Activated CD4-positive, alpha-beta T cell treated with anti-CD3 and anti-CD28 coated beads, Interleukin-2, amount 10 ng/mL, durations not matched to agents 24 days and 14 days (primary cell): ENCODE measurements at regions of chr2 and their contacts with region 1.

Region 1: DNA sequence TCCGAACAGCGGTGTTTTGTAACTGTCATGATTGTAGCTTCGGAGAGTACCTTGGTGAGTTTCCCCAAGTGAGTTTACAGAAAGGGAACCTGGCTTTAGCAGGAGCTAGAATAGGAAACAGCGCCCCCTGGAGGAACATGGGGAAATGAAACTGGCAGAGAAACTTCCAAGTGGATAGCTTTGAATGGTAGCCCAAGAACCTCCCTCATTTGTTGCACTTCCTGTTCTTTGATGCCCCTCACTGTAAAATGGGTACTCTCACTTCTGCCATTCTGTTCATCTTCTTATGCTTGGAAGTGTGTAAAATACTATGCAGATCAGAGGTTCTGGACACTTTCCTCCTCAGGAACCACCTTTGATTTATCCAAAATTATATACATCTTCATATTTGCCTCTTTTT is 36.2 kb downstream of the CHST10 start:
- DNase-seq: peak; percentile 93
- H3K4me3 Mint-ChIP-seq: no peak overlapping the region
- H3K27ac Mint-ChIP-seq: no peak overlapping the region
- H3K4me1 Mint-ChIP-seq: peaks cover 3% of the 10 kb centered on the region
- H3K27me3 Mint-ChIP-seq: peaks cover 9% of the 10 kb centered on the region

Region 2: DNA sequence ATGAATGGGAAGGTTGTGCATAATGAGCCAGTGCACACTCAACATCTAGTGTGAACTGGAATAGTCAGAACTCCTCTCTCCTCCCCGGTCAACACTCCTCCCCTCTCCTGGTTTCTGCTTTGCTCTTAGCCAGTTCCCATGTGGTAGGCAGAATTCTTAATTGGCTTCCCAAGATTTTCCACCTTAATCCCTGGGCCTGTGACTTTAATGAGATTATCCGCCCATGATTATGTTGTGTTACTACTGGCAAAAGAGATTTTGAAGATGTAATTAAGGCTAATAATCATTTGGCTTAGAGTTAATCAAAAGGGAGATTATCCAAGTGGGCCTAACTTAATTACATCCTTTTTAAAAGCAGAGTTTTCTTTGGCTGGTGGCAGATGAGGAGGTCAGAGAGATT is 857.2 kb before region 1 on chr2:
- intact Hi-C with region 1: no loop called
- DNase-seq: no peak
- H3K4me3 Mint-ChIP-seq: no peak overlapping the region
- H3K27ac Mint-ChIP-seq: no peak overlapping the region
- H3K4me1 Mint-ChIP-seq: no peaks in the 10 kb centered on the region
- H3K27me3 Mint-ChIP-seq: peaks cover 4% of the 10 kb centered on the region

Region 3: DNA sequence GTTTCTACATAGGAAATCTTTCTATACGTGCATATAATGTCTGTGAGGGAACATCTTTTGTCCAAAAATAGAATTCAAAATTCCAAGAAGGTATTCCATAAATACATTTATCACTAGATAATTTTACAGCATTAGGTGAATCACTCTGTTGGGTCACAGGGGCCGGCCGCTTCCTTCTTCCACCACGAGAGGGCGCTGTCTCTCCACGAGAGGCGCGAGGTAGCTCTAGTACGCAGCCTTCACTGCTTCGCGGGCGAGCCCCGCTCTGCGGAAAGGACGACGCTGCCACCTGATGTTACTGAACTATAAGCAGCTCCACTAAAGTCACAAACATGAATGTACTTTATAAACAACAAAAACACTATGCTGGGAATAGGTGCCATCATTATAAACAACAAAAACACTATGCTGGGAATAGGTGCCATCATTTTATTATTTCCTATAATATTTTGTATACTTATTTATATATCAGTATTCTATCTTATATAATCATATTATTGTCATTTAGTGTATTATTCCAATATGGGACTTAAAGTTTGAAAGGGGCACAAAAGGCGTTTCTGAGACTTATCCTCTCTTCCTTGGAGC is 822.1 kb before region 1 on chr2:
- intact Hi-C with region 1: loop called (anchors 2 kb)
- DNase-seq: peak; percentile 93
- H3K4me3 Mint-ChIP-seq: no peak overlapping the region
- H3K27ac Mint-ChIP-seq: no peak overlapping the region
- H3K4me1 Mint-ChIP-seq: peaks cover 2% of the 10 kb centered on the region
- H3K27me3 Mint-ChIP-seq: peaks cover 2% of the 10 kb centered on the region

Region 4: DNA sequence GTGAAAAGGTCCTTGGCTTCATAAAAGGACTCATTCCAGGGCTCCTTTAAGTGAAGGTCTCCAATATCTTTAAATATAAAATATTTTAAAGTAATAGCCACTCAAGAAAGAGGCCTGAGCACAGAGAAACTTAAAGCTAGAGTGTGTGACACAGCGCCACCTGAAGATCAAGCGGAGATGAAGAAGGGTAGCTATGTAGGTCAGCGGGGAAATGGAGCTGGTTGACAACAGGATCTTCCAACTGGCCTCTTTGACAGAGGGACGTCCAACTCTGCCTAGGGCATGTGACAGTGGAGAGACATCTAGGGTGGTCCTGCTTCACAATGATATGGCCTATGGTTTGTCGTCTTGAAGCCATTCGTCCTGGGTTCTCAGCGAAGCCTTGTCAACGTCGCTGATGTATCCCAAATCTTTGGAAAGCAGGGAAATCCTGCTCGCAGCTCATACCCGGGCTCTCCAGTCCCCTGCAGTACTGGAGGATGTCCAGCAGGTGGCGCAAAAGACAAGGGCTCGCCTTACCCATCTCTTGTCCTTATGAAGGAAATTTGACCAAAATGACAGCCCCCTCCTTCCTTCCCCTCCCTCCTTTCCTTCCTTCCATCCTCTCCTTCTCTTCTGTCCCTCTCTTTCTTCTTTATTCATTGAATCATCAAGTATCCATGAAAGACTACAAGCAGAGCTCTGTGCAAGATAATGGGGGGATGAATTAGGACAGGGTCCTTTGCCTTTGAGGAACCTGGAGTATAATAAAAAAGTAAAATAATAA is 118.5 kb before region 1 on chr2:
- intact Hi-C with region 1: loop called (anchors 1 kb)
- DNase-seq: peak; percentile 87
- H3K4me3 Mint-ChIP-seq: no peak overlapping the region
- H3K27ac Mint-ChIP-seq: no peak overlapping the region
- H3K4me1 Mint-ChIP-seq: peaks cover 2% of the 10 kb centered on the region
- H3K27me3 Mint-ChIP-seq: peaks cover 2% of the 10 kb centered on the region